Posterior cingulate gyrus (tissue), 11 donors: ENCODE measurements at regions of chr4 and their contacts with region 1.

Region 1: GRCh38 chr4:88823058-88823919 is 125.7 kb upstream of the NAP1L5 start:
- DNase-seq: peak; percentile 65 to 96 (median 75)

Region 2: DNA sequence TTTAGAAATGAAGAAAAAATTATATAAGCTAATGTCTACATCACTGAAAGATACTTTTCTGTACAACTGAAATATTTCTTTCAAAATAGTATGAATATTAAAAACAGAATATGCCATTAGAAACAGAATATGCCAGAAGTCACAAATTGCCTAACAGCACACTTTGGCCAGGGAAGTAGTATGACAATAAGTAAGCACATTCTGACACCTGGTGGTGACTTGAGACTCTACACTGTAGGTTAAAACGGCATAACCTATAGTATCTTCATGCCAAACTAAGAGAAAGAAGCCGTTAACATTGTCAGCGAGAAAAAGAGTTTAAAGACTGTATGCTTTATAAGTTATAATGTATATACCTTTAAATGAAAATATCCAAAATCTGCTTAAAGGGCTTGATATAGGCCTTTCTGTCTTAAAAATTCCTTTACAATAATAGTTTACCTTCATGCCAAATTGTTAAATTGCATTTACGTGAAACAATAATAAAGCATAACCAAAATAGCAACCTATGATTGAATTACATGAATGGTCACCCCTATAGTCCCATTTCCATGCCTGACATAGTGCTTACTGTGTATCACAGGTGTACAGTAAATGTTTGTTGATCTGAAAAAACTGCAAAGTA is 200.9 kb after region 1 on chr4:
- intact Hi-C with region 1: loop called (anchors 1 kb)
- DNase-seq: peak in 2 of 10 donors; percentile 9 to 46

Region 3: GRCh38 chr4:89110986-89111832 is 287.9 kb after region 1 on chr4 and contains the start of gene TIGD2:
- intact Hi-C with region 1: loop called (anchors 2 kb)
- DNase-seq: peak; percentile 70 to 97 (median 80)

Region 4: DNA sequence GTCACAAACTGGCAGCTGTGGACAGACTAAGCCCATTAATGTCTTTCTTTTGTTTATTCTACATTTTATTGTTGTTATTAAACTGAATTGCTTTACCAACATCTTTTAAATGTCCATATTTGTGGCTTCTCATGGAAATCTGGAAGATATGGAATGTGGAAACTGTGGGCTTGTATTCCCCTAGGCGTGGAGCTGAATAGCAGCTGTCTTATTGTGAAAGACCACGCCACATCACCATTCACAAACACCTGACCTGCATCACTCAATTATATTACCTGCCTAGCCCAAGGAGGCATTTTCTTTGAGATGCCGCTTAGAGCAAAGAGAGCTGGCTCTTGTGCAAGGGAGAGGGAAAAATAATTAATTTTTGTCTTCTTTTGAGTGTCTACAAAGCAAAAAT is 581.2 kb after region 1 on chr4:
- intact Hi-C with region 1: no loop called
- DNase-seq: no peak